ENCODE measurements at regions of chr20 and their contacts with region 1.

Region 1: GRCh38 chr20:33515569-33516216 is 25.8 kb downstream of the CBFA2T2 start:
- DNase-seq: peak; percentile 9
- ATAC-seq: no peak
- H3K4me3 ChIP-seq: no peak overlapping the region
- H3K27ac ChIP-seq: no peak overlapping the region
- H3K4me1 ChIP-seq: peaks cover 14% of the 10 kb centered on the region
- H3K27me3 ChIP-seq: no peaks in the 10 kb centered on the region
- CTCF ChIP-seq: peak; percentile 63

Region 2: GRCh38 chr20:33482581-33482980 is 33.1 kb before region 1 on chr20:
- CTCF ChIA-PET with region 1: interaction called, 15 read pairs
- POLR2A ChIA-PET with region 1: no interaction called
- intact Hi-C with region 1: no loop called
- DNase-seq: no peak
- ATAC-seq: no peak
- H3K4me3 ChIP-seq: no peak overlapping the region
- H3K27ac ChIP-seq: no peak overlapping the region
- H3K4me1 ChIP-seq: no peaks in the 10 kb centered on the region
- H3K27me3 ChIP-seq: no peaks in the 10 kb centered on the region
- CTCF ChIP-seq: no peak

Region 3: GRCh38 chr20:33489495-33490022 is 26.1 kb before region 1 on chr20:
- CTCF ChIA-PET with region 1: interaction called, 6 read pairs
- POLR2A ChIA-PET with region 1: interaction called, 13 read pairs
- intact Hi-C with region 1: no loop called
- DNase-seq: peak; percentile 98
- ATAC-seq: peak; percentile 96
- H3K4me3 ChIP-seq: peak overlapping the region; percentile 67
- H3K27ac ChIP-seq: peak overlapping the region; percentile 51
- H3K4me1 ChIP-seq: peaks cover 10% of the 10 kb centered on the region; the same call in 1 of the 2 replicates
- H3K27me3 ChIP-seq: no peaks in the 10 kb centered on the region
- CTCF ChIP-seq: no peak

Region 4: GRCh38 chr20:33609504-33609903 is 93.8 kb after region 1 on chr20:
- CTCF ChIA-PET with region 1: interaction called, 10 read pairs
- POLR2A ChIA-PET with region 1: no interaction called
- intact Hi-C with region 1: no loop called
- DNase-seq: no peak
- ATAC-seq: no peak
- H3K4me3 ChIP-seq: no peak overlapping the region
- H3K27ac ChIP-seq: no peak overlapping the region
- H3K4me1 ChIP-seq: no peaks in the 10 kb centered on the region
- H3K27me3 ChIP-seq: no peaks in the 10 kb centered on the region
- CTCF ChIP-seq: no peak

Region 5: DNA sequence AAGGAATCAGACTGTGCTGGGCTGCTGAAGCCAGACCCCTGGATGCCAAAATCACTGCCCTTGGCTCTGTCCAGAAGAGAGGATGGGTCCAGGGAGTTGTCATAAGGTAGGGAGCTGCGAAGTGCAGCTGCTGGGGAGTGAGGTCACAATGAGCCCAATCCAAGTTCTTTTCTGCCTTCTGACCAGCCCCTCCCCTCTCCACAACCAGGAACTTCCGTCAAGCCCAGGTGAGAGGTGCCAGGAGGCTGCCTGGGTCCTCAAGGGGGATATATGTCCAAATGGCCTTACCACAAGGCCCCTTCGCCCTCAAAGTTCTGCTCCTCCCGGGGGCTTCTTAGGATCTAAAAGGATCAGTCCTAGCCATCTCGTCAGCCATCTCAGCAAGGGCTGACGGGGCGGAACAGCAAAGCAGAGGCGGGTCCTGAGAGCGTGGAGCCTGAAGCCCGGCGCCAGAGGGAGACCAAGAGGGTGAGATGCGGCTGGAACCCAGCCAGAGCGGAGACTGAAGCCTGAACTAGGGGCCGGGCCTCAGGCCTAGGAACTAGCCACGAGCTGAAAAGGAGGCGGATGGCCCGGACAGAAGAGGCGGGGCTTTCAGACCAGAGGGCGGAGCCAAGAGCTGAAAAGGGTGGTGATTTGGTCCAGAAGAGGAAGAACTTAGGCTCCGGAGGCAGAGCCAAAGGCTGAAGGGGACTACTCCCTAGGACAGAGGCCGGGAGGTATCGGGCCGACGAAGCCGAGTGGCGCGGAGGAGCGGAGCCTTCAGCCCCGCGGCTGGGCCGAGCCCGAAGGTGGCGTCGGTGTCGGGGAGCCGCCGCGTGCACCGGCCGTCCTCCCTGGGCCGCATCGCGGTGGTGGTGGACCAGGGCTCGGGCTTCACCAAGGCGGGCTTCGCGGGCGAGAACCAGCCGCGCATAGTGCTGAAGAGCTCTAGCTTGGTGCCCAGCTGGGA is 150.9 kb after region 1 on chr20 and contains the start of gene ACTL10:
- CTCF ChIA-PET with region 1: interaction called, 12 read pairs
- POLR2A ChIA-PET with region 1: no interaction called
- intact Hi-C with region 1: no loop called
- DNase-seq: peak; percentile 95
- ATAC-seq: peak; percentile 56
- H3K4me3 ChIP-seq: peak within 1 kb of the TSS; percentile 65
- H3K27ac ChIP-seq: peak within 1 kb of the TSS; percentile 23; the same call in 1 of the 2 replicates
- H3K4me1 ChIP-seq: peaks cover 25% of the 10 kb centered on the region; the same call in 1 of the 2 replicates
- H3K27me3 ChIP-seq: no peaks in the 10 kb centered on the region
- CTCF ChIP-seq: no peak
- total RNA-seq, gene ACTL10: 1.6 and 2.8 TPM in 2 replicates